ENCODE measurements at regions of chr15 and their contacts with region 1.

Region 1: GRCh38 chr15:90954712-90955671 is at the start of gene RCCD1:
- DNase-seq: peak; percentile 71 to 94 (median 80)
- ATAC-seq: peak; percentile 92
- H3K4me3 ChIP-seq: peak within 1 kb of the TSS; percentile 74
- H3K4me3 Mint-ChIP-seq: peak within 1 kb of the TSS; percentile 87
- H3K27ac ChIP-seq: peak within 1 kb of the TSS; percentile 87 to 92
- H3K27ac Mint-ChIP-seq: peak within 1 kb of the TSS; percentile 88
- H3K4me1 ChIP-seq: peaks cover 26% of the 10 kb centered on the region
- H3K4me1 Mint-ChIP-seq: peaks cover 9% of the 10 kb centered on the region
- H3K27me3 ChIP-seq: no peaks in the 10 kb centered on the region
- H3K27me3 Mint-ChIP-seq: no peaks in the 10 kb centered on the region
- CTCF ChIP-seq: no peak
- total RNA-seq, gene RCCD1: 4.5 to 4.8 TPM

Region 2: GRCh38 chr15:90886041-90886614 is 68.9 kb before region 1 on chr15:
- CTCF ChIA-PET with region 1: no interaction called
- POLR2A ChIA-PET with region 1: no interaction called
- intact Hi-C with region 1: no loop called
- DNase-seq: peak; percentile 62 to 87 (median 74)
- ATAC-seq: peak; percentile 70
- H3K4me3 ChIP-seq: peak overlapping the region; percentile 42
- H3K4me3 Mint-ChIP-seq: no peak overlapping the region
- H3K27ac ChIP-seq: no peak overlapping the region
- H3K27ac Mint-ChIP-seq: no peak overlapping the region
- H3K4me1 ChIP-seq: peaks cover 26% of the 10 kb centered on the region
- H3K4me1 Mint-ChIP-seq: peaks cover 13% of the 10 kb centered on the region
- H3K27me3 ChIP-seq: peaks cover 3 to 5% of the 10 kb centered on the region in 2 experiments
- H3K27me3 Mint-ChIP-seq: peaks cover 15% of the 10 kb centered on the region
- CTCF ChIP-seq: peak; percentile 98

Region 3: GRCh38 chr15:90994417-90995311 is 39.7 kb after region 1 on chr15 and contains the start of gene PRC1:
- CTCF ChIA-PET with region 1: interaction called, 3 read pairs
- POLR2A ChIA-PET with region 1: no interaction called
- intact Hi-C with region 1: loop called (anchors 2 to 5 kb)
- DNase-seq: peak; percentile 93 to 99 (median 96)
- ATAC-seq: peak; percentile 95
- H3K4me3 ChIP-seq: peak within 1 kb of the TSS; percentile 100
- H3K4me3 Mint-ChIP-seq: peak within 1 kb of the TSS; percentile 100
- H3K27ac ChIP-seq: peak within 1 kb of the TSS; percentile 89 to 91
- H3K27ac Mint-ChIP-seq: peak within 1 kb of the TSS; percentile 99
- H3K4me1 ChIP-seq: peaks cover 13% of the 10 kb centered on the region
- H3K4me1 Mint-ChIP-seq: peaks cover 21% of the 10 kb centered on the region
- H3K27me3 ChIP-seq: no peaks in the 10 kb centered on the region
- H3K27me3 Mint-ChIP-seq: no peaks in the 10 kb centered on the region
- CTCF ChIP-seq: no peak
- total RNA-seq, gene PRC1: 24.4 to 26.7 TPM

Region 4: DNA sequence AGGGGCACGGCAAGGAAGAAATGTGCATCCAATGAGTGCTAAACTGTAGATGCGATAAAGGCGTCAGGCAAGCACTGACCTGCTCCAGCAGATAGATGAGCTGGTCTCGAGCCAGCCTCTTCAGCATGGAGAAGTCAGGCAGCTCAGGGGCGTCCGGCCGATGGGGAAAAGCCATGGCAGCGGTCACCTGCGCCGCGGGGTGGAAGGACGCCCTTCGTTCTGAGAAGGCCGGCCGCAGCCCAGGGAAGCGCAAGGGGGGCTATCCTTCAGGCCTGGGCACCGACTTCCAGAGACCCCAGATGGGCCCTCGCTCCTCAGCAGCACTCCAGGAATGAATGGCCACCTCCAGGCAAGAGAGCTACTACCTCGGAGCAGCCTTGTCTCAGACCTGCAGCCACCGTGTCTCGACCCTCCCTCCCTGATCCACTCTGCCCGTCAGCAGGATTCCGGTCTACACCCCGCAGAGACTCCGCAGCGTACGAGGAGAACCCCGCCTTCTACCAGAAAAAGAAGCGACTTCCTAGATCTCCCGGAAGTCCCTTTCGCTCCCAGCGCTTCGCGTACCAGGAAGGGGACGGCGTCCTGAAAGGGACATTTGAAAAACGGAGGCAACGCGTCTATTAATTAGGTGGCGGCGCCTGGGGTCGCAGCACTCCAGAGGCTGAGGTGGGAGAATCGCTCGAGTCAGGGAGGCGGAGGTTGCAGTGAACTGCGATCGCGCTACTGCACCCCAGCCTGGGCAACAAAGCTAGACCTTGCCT is 67.3 kb after region 1 on chr15 and contains the start of gene VPS33B:
- CTCF ChIA-PET with region 1: interaction called, 11 read pairs
- POLR2A ChIA-PET with region 1: interaction called, 3 read pairs
- intact Hi-C with region 1: loop called in 1 of 2 experiments (anchors 5 kb)
- DNase-seq: peak; percentile 52 to 91 (median 71)
- ATAC-seq: peak; percentile 88
- H3K4me3 ChIP-seq: peak within 1 kb of the TSS; percentile 86
- H3K4me3 Mint-ChIP-seq: peak within 1 kb of the TSS; percentile 96
- H3K27ac ChIP-seq: peak within 1 kb of the TSS; percentile 56 to 62
- H3K27ac Mint-ChIP-seq: peak within 1 kb of the TSS; percentile 88
- H3K4me1 ChIP-seq: peaks cover 30% of the 10 kb centered on the region
- H3K4me1 Mint-ChIP-seq: peaks cover 48% of the 10 kb centered on the region
- H3K27me3 ChIP-seq: no peaks in the 10 kb centered on the region
- H3K27me3 Mint-ChIP-seq: no peaks in the 10 kb centered on the region
- CTCF ChIP-seq: no peak
- total RNA-seq, gene VPS33B: 17.2 to 23.8 TPM

Region 5: DNA sequence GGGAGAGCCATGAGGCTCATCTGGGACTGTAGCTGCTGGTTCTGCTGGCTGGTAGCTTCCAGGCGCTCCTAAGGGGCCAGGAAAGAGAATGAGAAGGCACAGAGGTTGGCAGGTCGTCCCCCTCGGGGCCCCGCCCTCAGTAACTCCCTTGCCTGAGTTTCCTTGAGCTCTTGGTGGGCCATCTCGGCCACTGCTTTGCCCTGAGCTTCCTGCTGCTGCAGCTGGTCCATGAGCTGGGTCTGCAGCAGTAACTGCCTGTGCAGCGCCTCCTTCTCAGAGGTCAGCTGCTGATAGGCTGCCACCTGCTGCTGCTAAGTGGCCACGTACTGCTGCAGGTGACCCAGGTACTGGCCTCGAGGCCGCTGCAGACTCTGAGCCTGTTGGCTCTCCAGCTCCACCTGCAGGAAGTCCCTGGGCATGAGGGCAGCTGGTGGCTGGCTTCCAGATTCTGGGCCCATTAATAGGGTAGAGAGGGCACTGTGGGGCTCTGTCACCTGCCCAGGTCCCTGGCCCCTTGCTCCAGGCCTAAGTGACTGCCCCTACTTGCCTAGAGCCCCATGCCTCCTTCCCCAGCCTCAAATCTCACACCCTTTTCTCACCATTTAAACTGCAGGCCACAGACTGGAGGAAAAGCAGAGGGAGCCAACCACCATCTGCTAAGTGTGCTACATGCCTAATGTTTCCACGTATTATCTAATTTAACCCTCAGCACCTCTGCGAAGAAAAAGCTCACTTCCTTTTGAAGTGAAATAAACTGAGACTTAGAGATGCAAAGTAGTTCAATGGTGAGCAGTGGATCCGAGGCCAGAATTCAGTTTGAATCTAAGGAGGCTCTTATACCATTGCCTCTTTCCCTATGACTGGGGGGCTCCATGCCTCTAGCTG is 78.2 kb after region 1 on chr15:
- CTCF ChIA-PET with region 1: interaction called, 16 read pairs
- POLR2A ChIA-PET with region 1: interaction called, 3 read pairs
- intact Hi-C with region 1: loop called in 1 of 2 experiments (anchors 2 kb)
- DNase-seq: peak; percentile 26 to 74 (median 52)
- ATAC-seq: peak; percentile 64
- H3K4me3 ChIP-seq: no peak overlapping the region
- H3K4me3 Mint-ChIP-seq: no peak overlapping the region
- H3K27ac ChIP-seq: no peak overlapping the region
- H3K27ac Mint-ChIP-seq: no peak overlapping the region
- H3K4me1 ChIP-seq: peaks cover 6% of the 10 kb centered on the region
- H3K4me1 Mint-ChIP-seq: no peaks in the 10 kb centered on the region
- H3K27me3 ChIP-seq: peaks cover 0 to 4% of the 10 kb centered on the region in 2 experiments
- H3K27me3 Mint-ChIP-seq: no peaks in the 10 kb centered on the region
- CTCF ChIP-seq: peak; percentile 73

Region 6: DNA sequence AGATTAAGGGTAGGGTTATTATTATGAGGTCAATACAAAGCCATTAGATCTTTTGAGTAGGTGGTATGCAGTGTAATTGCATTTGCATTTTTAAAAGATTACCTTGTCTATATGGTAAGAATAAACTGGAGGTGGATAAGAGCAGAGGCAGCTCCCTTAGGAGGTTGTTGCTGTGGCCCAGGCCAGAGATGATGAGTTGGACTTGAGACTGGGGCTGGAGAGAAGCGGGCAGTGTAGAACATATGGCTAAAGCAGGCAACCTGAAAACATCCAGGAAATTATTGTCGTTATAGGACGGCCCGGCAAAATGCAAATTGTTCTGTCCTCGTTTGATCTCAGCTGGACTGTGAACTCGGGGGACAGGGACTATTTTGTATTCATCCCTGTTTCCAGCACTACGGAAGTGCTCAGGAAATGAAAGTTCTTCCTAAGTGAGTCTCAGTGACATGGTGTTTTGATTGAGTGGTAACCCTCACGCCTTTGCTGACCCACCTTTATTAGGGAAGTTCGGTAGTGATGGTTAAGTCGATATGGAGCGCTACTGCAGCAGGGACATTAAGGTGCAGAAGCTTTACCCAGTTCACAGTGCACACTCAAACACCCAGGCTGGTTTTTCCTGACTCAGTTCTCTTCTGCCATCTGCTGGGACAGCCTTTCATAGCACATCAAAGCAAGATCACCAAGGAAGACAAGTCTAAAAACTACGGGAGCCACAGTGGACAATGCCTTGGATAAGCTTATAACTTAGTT is 94.6 kb after region 1 on chr15:
- CTCF ChIA-PET with region 1: interaction called, 6 read pairs
- POLR2A ChIA-PET with region 1: no interaction called
- intact Hi-C with region 1: loop called (anchors 1 kb)
- DNase-seq: peak in 12 of 14 experiments; percentile 2 to 75 (median 50)
- ATAC-seq: peak; percentile 90
- H3K4me3 ChIP-seq: no peak overlapping the region
- H3K4me3 Mint-ChIP-seq: no peak overlapping the region
- H3K27ac ChIP-seq: no peak overlapping the region
- H3K27ac Mint-ChIP-seq: no peak overlapping the region
- H3K4me1 ChIP-seq: peaks cover 9% of the 10 kb centered on the region
- H3K4me1 Mint-ChIP-seq: peaks cover 30% of the 10 kb centered on the region
- H3K27me3 ChIP-seq: peaks cover 0 to 3% of the 10 kb centered on the region in 2 experiments
- H3K27me3 Mint-ChIP-seq: peaks cover 16% of the 10 kb centered on the region
- CTCF ChIP-seq: peak; percentile 55

Region 7: DNA sequence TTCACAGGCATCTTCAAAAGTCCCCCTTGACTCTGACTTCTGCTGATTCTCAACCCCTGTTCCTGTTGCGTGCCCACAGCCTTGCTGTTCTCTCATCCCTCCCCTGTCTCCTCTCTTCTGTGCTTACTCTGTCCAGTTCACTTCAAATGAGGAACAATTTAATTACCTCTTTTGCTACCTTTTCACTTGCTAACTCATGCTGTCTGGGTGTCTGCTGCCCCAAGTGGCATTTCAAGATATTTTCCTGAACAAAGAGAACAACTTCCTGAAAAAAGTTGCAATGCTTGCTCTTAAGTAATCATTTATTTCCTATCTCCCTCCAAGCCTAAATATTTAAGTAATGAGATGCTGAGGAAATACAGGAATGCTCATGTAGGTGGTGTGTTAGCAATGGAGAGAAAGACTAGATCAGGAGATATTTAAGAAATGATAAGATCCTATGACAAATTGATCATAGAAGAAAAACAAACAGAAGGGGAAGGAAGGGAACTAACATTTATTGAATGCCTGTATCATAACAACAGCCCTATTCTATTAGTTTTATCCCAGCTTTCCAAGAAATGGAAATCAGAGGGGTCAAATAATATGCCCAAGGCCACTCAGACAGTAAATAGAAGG is 187.2 kb after region 1 on chr15:
- CTCF ChIA-PET with region 1: no interaction called
- POLR2A ChIA-PET with region 1: no interaction called
- intact Hi-C with region 1: no loop called
- DNase-seq: peak in 2 of 14 experiments; percentile 9 to 14
- ATAC-seq: no peak
- H3K4me3 ChIP-seq: no peak overlapping the region
- H3K4me3 Mint-ChIP-seq: no peak overlapping the region
- H3K27ac ChIP-seq: no peak overlapping the region
- H3K27ac Mint-ChIP-seq: no peak overlapping the region
- H3K4me1 ChIP-seq: no peaks in the 10 kb centered on the region
- H3K4me1 Mint-ChIP-seq: no peaks in the 10 kb centered on the region
- H3K27me3 ChIP-seq: peaks cover 2 to 8% of the 10 kb centered on the region in 2 experiments
- H3K27me3 Mint-ChIP-seq: peaks cover 55% of the 10 kb centered on the region
- CTCF ChIP-seq: no peak

Region 8: DNA sequence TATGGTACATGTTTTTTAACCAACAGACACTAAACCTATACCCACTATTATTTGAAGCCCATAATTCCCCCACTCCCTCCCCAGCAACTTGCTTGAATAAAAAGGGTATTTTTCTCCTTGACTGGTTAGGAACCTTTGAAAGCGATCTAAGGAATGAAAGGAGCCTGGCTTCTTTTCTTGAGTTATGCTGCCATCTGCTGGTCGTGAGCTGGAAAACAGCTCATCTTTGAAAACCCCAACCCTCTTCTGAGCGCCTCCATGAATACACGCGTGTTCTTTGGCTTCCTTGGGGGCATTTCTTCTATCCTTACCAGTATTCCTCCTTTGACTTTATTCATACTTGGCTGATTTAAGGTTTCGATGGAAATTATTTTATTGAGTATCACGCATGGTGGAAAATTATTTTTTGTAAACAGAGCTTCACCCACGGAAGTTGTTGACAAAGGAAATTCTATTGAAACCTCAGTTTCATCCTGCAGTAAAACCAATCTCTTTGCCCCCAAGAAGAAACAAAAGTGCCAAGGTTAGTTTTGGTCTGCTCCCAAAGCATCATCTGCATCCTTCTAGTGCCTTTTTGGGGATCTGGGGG is 316.7 kb after region 1 on chr15:
- CTCF ChIA-PET with region 1: interaction called, 4 read pairs
- POLR2A ChIA-PET with region 1: interaction called, 3 read pairs
- intact Hi-C with region 1: loop called (anchors 1 kb)
- DNase-seq: peak; percentile 23 to 84 (median 44)
- ATAC-seq: peak; percentile 71
- H3K4me3 ChIP-seq: no peak overlapping the region
- H3K4me3 Mint-ChIP-seq: no peak overlapping the region
- H3K27ac ChIP-seq: no peak overlapping the region
- H3K27ac Mint-ChIP-seq: no peak overlapping the region
- H3K4me1 ChIP-seq: peaks cover 5% of the 10 kb centered on the region
- H3K4me1 Mint-ChIP-seq: peaks cover 6% of the 10 kb centered on the region
- H3K27me3 ChIP-seq: no peaks in the 10 kb centered on the region
- H3K27me3 Mint-ChIP-seq: peaks cover 28% of the 10 kb centered on the region
- CTCF ChIP-seq: peak; percentile 82